Thyroid gland (tissue), 4 donors: ENCODE measurements at regions of chr16 and their contacts with region 1.

Region 1: GRCh38 chr16:1474796-1475551 is at the start of gene CLCN7:
- DNase-seq: peak; percentile 92 to 93
- H3K4me3 ChIP-seq: peak within 1 kb of the TSS; percentile 60 to 98 (median 72)
- H3K27ac ChIP-seq: peak within 1 kb of the TSS; percentile 81 to 91 (median 88)
- H3K4me1 ChIP-seq: peaks cover 15 to 27% of the 10 kb centered on the region in 2 donors
- H3K27me3 ChIP-seq: no peaks in the 10 kb centered on the region
- CTCF ChIP-seq: no peak
- POLR2A ChIP-seq: peak; percentile 64 to 81
- total RNA-seq, gene CLCN7: 50.3 to 144 (median 89.9) TPM

Region 2: GRCh38 chr16:1342526-1343427 is 132.2 kb before region 1 on chr16:
- intact Hi-C with region 1: loop called (anchors 10 kb)
- DNase-seq: peak; percentile 88 to 95
- H3K4me3 ChIP-seq: no peak overlapping the region
- H3K27ac ChIP-seq: no peak overlapping the region
- H3K4me1 ChIP-seq: peaks cover 4 to 11% of the 10 kb centered on the region in 2 donors
- H3K27me3 ChIP-seq: no peaks in the 10 kb centered on the region
- CTCF ChIP-seq: no peak
- POLR2A ChIP-seq: no peak

Region 3: GRCh38 chr16:1413684-1414531 is 61.1 kb before region 1 on chr16:
- intact Hi-C with region 1: loop called (anchors 5 kb)
- DNase-seq: peak; percentile 67 to 69
- H3K4me3 ChIP-seq: peak overlapping the region; percentile 87 to 98 (median 98)
- H3K27ac ChIP-seq: peak overlapping the region in 2 of 3 donors; percentile 66 to 78
- H3K4me1 ChIP-seq: peaks cover 0 to 5% of the 10 kb centered on the region in 2 donors
- H3K27me3 ChIP-seq: no peaks in the 10 kb centered on the region
- CTCF ChIP-seq: peak in 4 of 6 experiments; percentile 30 to 61 (median 34)
- POLR2A ChIP-seq: no peak